ENCODE measurements at regions of chr11 and their contacts with region 1.

Region 1: GRCh38 chr11:4658629-4659445 is 15.1 kb downstream of the OR51E1 start:
- DNase-seq: no peak
- H3K4me3 ChIP-seq: no peak overlapping the region
- H3K4me3 Mint-ChIP-seq: no peak overlapping the region
- H3K27ac ChIP-seq: no peak overlapping the region
- H3K27ac Mint-ChIP-seq: no peak overlapping the region
- H3K4me1 ChIP-seq: no peaks in the 10 kb centered on the region
- H3K4me1 Mint-ChIP-seq: no peaks in the 10 kb centered on the region
- H3K27me3 ChIP-seq: no peaks in the 10 kb centered on the region
- H3K27me3 Mint-ChIP-seq: peaks cover 0 to 8% (median 4%) of the 10 kb centered on the region in 3 donors
- CTCF ChIP-seq: no peak

Region 2: DNA sequence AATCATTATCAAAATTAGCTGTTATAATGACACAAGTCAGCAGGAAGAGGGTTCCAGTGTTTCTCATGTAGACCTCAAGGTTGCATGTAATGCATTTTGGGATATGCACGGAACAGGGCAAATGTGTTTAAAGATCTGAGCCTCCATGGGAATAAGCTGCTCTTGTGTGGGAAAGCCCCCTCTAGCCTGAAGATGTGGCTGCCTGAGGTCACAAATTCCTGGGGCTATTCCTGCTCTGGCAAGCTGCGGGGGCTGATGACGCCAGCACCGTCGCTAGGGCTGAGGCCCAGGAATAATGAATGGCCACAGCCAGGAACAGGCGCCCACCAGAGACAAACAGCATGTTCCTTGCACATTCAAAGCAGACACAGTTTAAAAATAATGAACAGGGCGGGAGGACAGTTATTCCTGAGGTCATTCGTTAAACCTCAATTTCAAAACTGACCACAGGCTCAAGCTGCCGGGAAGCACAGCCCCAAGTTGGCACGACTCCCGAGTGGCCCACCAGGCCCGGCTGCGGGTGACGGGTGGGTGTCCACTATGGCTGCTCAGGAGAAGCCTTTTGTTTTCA is 1505.5 kb before region 1 on chr11:
- intact Hi-C with region 1: no loop called
- DNase-seq: peak in 1 of 3 donors; percentile 22
- H3K4me3 ChIP-seq: no peak overlapping the region
- H3K4me3 Mint-ChIP-seq: peak overlapping the region; percentile 24 to 68
- H3K27ac ChIP-seq: peak overlapping the region; percentile 34 to 65
- H3K27ac Mint-ChIP-seq: peak overlapping the region in 6 of 7 donors; percentile 66 to 96 (median 78)
- H3K4me1 ChIP-seq: peaks cover 51 to 56% of the 10 kb centered on the region in 2 donors
- H3K4me1 Mint-ChIP-seq: peaks cover 59% of the 10 kb centered on the region
- H3K27me3 ChIP-seq: no peaks in the 10 kb centered on the region
- H3K27me3 Mint-ChIP-seq: no peaks in the 10 kb centered on the region
- CTCF ChIP-seq: no peak

Region 3: DNA sequence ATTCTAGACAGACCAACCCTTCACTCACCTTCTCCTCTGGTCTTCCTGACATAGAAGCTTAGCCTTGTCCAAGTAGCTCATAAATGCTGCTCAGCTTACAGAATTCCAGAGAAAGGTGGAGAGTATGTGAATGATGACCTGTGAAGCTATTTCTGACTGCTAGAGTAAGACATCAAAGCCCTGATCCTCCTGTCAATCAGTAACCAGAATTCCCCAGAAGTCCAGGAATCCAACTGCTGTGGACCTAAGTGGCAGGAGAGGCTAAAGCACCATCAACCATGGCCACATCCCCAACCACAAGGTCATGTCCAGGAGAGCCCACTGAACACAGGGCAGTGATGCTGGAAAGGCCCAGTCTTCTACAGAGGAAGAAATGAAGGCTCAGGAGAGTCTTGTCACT is 257.7 kb after region 1 on chr11:
- intact Hi-C with region 1: no loop called
- DNase-seq: no peak
- H3K4me3 ChIP-seq: no peak overlapping the region
- H3K4me3 Mint-ChIP-seq: no peak overlapping the region
- H3K27ac ChIP-seq: no peak overlapping the region
- H3K27ac Mint-ChIP-seq: no peak overlapping the region
- H3K4me1 ChIP-seq: no peaks in the 10 kb centered on the region
- H3K4me1 Mint-ChIP-seq: no peaks in the 10 kb centered on the region
- H3K27me3 ChIP-seq: no peaks in the 10 kb centered on the region
- H3K27me3 Mint-ChIP-seq: peaks cover 2% of the 10 kb centered on the region in 3 donors
- CTCF ChIP-seq: no peak

Region 4: GRCh38 chr11:5796541-5796940 is 1137.7 kb after region 1 on chr11:
- intact Hi-C with region 1: loop called in 1 of 2 experiments (anchors 10 kb)
- DNase-seq: no peak
- H3K4me3 ChIP-seq: no peak overlapping the region
- H3K4me3 Mint-ChIP-seq: no peak overlapping the region
- H3K27ac ChIP-seq: no peak overlapping the region
- H3K27ac Mint-ChIP-seq: no peak overlapping the region
- H3K4me1 ChIP-seq: no peaks in the 10 kb centered on the region
- H3K4me1 Mint-ChIP-seq: peaks cover 3% of the 10 kb centered on the region
- H3K27me3 ChIP-seq: no peaks in the 10 kb centered on the region
- H3K27me3 Mint-ChIP-seq: peaks cover 0 to 2% (median 0%) of the 10 kb centered on the region in 3 donors
- CTCF ChIP-seq: no peak